Motor neuron (in vitro differentiated cells): ENCODE measurements at regions of chr18 and their contacts with region 1.

Region 1: DNA sequence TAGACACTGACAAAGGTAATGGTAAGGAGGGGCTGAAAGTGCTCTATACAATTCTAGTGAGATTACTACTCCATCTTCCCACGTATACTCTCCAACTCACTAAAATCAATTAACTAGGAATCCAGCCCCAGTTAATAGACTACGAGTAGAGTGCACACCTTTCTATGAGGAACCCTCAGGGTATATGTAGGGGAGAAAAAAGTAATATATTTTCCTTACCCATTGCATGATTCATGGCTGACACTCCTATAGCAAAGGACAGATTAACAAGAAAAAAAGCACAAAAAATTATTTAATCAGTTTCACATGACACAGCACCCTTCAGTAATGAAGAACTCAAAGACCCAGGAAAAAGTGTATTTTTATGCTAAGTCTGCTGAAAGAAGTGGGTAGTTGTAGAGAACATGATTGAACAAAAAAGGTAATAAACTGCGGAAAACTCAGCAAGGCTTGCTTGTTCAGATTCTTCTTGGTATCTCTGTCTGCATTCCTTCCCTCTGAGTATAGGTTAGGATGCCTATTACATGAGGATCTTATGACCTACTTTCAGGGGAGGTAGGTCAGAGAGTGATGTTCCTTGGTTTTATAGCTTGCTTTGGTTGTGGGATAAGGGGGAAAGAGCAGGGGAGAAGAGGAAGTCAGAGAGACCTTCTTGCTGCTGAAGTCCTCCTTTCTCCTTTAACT is 342.0 kb upstream of the DLGAP1 start:
- ATAC-seq: no peak
- H3K4me3 ChIP-seq: no peak overlapping the region
- H3K27ac ChIP-seq: no peak overlapping the region
- H3K4me1 ChIP-seq: no peaks in the 10 kb centered on the region

Region 2: DNA sequence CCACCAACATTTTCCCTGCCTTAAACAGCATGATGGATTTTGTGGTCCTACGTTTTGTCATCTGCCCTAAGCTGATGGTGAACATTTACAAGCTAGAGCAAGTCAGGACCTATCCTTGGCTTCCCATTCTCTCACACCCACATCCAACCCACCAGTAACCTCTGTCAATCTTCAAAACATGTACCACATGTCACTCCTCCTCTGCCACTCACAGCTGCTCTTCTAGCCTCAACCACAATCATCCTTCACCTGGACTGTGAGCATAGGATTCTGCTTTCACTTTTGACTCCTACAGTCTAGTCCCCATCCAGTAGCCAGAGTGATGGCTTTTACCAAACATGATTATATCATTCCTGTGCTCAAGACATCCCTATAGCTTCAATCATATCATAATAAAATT is 62.2 kb before region 1 on chr18:
- in situ Hi-C with region 1: loop called in 1 of 9 experiments (anchors 10 kb)
- ATAC-seq: no peak
- H3K4me3 ChIP-seq: no peak overlapping the region
- H3K27ac ChIP-seq: no peak overlapping the region
- H3K4me1 ChIP-seq: no peaks in the 10 kb centered on the region